ENCODE measurements at regions of chr1 and their contacts with region 1.

Region 1: DNA sequence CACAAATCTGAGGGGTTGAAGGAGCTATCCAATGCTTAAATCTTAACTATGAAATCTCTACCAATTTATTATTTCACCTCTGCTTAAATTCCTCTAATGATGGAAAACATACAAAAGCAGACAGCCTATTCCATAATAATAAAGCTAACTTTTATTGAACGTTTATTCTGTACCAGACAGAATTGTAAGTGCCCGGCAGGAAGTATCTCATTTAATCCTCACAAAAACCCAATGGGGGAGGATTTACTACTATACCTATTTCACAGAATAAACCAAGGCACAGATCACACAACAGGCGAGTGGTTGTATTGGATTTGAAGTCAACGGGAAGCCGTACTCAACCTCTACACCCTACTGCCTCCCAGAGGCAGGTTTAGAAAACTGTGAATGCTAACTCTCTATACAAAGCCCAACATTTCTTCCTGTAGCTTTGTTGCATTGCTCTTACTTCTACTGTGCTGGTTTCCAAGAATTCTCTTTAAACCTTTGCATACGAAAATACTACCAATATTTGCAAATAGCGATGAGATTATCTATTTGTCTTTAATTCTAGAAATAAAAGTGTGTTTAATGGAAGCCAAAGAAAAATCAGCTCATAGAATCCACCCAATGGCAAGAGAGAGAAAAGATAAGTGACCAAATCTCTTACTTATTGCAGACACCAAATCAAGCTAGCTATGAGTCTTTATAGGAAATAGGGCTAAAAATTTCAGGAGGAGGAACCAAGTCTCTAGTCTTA is 33.5 kb upstream of the C1orf53 start:
- DNase-seq: peak in 6 of 9 experiments; percentile 2 to 66 (median 30)
- ATAC-seq: peak; percentile 91
- H3K4me3 ChIP-seq: no peak overlapping the region
- H3K4me3 Mint-ChIP-seq: no peak overlapping the region
- H3K27ac ChIP-seq: no peak overlapping the region
- H3K27ac Mint-ChIP-seq: no peak overlapping the region
- H3K4me1 ChIP-seq: no peaks in the 10 kb centered on the region
- H3K4me1 Mint-ChIP-seq: no peaks in the 10 kb centered on the region
- H3K27me3 ChIP-seq: no peaks in the 10 kb centered on the region
- H3K27me3 Mint-ChIP-seq: peaks cover 6% of the 10 kb centered on the region
- CTCF ChIP-seq: peak; percentile 79

Region 2: GRCh38 chr1:197614916-197615692 is 253.8 kb before region 1 on chr1:
- CTCF ChIA-PET with region 1: interaction called, 29 read pairs
- POLR2A ChIA-PET with region 1: no interaction called
- intact Hi-C with region 1: loop called (anchors 1 kb)
- DNase-seq: peak in 4 of 9 experiments; percentile 7 to 49 (median 28)
- ATAC-seq: peak; percentile 46
- H3K4me3 ChIP-seq: no peak overlapping the region
- H3K4me3 Mint-ChIP-seq: no peak overlapping the region
- H3K27ac ChIP-seq: no peak overlapping the region
- H3K27ac Mint-ChIP-seq: no peak overlapping the region
- H3K4me1 ChIP-seq: no peaks in the 10 kb centered on the region
- H3K4me1 Mint-ChIP-seq: no peaks in the 10 kb centered on the region
- H3K27me3 ChIP-seq: no peaks in the 10 kb centered on the region
- H3K27me3 Mint-ChIP-seq: no peaks in the 10 kb centered on the region
- CTCF ChIP-seq: peak; percentile 49

Region 3: GRCh38 chr1:197692965-197693364 is 176.0 kb before region 1 on chr1:
- CTCF ChIA-PET with region 1: interaction called, 3 read pairs
- POLR2A ChIA-PET with region 1: no interaction called
- intact Hi-C with region 1: loop called (anchors 1 to 10 kb)
- DNase-seq: peak in 1 of 9 experiments; percentile 14
- ATAC-seq: no peak
- H3K4me3 ChIP-seq: no peak overlapping the region
- H3K4me3 Mint-ChIP-seq: no peak overlapping the region
- H3K27ac ChIP-seq: no peak overlapping the region
- H3K27ac Mint-ChIP-seq: no peak overlapping the region
- H3K4me1 ChIP-seq: no peaks in the 10 kb centered on the region
- H3K4me1 Mint-ChIP-seq: peaks cover 14% of the 10 kb centered on the region
- H3K27me3 ChIP-seq: no peaks in the 10 kb centered on the region
- H3K27me3 Mint-ChIP-seq: no peaks in the 10 kb centered on the region
- CTCF ChIP-seq: no peak

Region 4: DNA sequence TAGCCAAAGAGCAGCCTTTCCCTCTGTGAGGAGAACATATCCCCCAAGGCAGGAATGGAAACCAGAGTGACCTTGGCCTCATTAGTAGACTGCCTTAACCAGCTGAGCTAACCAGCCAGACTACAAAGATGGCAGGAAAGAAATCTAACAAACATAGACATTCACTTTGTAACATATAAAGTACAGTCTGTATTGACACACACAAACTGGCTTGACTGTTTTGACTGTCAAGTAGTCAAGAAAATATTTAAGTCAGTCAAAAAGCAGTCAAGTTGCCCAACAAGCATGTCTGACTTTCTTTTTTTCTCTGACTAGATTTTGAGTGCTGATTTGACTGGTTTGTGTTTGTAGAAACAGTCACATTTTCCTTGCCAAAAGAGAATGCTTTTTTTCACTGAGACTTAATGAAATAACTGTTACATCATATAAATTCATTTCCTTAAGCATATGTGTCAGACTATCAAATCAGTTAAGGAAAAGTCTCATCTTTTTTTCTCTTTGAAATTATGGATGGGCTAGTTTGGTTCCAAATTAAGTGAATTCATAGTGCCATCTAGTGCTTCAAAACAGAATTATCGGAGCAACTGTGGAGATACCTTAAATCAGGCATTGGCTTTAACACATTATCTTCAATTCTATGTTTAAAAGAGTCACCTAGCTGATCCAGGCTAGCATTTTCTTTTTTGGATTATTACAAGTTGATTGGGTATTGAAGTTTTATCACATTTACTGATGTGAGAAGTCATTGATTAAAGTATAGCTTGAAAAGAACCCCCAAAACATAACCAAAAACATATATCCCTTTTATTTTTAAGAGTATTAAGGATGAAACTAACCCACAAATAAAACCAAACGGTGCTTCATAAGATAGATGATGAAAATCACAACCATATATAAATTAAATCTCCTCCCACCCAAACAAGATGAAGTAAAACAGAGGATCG is 596.6 kb after region 1 on chr1:
- CTCF ChIA-PET with region 1: no interaction called
- POLR2A ChIA-PET with region 1: no interaction called
- intact Hi-C with region 1: loop called (anchors 2 to 10 kb)
- DNase-seq: peak in 2 of 9 experiments; percentile 52 to 64
- ATAC-seq: peak; percentile 58
- H3K4me3 ChIP-seq: no peak overlapping the region
- H3K4me3 Mint-ChIP-seq: no peak overlapping the region
- H3K27ac ChIP-seq: no peak overlapping the region
- H3K27ac Mint-ChIP-seq: no peak overlapping the region
- H3K4me1 ChIP-seq: no peaks in the 10 kb centered on the region
- H3K4me1 Mint-ChIP-seq: peaks cover 3% of the 10 kb centered on the region
- H3K27me3 ChIP-seq: no peaks in the 10 kb centered on the region
- H3K27me3 Mint-ChIP-seq: no peaks in the 10 kb centered on the region
- CTCF ChIP-seq: peak; percentile 75

Measured in CD8-positive, alpha-beta T cell (primary cell).